Activated CD4-positive, alpha-beta memory T cell treated with anti-CD3 and anti-CD28 coated beads for 36 hours (primary cell): ENCODE measurements at regions of chr5 and their contacts with region 1.

Region 1: DNA sequence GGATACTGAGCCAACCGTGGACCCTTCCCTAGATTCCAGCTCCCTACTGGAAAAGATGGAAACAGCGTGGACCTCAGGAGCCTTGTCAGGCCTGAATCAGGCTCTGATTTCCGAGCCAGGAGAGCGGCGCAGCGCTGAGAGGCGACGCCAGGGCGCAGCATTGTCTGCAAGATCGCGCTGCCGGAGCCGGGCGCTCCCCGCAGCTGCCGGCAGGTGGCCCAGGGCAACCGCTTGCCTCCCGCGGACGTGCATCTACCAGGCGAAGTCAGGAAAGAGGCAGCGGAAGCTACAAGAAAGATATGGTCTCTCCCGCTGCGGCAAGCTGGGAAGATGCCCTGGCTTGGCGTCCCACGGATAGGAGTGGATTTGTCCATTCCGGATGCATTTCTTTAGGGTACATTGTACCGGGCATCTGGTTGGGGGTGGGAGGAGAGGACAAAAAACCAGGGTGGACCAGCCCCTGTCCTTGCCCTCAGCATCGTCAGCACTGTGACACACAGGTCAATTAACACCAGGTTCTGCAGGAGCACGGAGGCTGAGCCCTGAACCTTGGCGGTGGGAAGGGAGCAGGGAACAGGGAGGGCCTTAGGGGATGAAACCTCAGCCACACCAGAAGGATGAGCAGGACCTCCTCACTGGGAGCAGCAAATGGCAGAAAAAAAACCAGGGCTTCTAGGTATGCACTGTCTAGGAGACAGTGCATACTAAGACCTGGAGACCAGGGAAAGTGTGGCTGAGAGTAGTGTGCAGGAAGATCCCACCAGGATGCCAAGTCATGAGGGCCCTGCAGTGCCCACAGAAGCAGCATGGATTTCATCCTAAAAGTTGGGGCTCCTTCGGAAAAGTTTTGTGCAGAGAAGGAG is 55.9 kb downstream of the SFXN1 start:
- DNase-seq: peak; percentile 91
- H3K4me3 Mint-ChIP-seq: peak overlapping the region; percentile 52
- H3K27ac Mint-ChIP-seq: peak overlapping the region; percentile 56
- H3K4me1 Mint-ChIP-seq: peaks cover 44% of the 10 kb centered on the region
- H3K27me3 Mint-ChIP-seq: no peaks in the 10 kb centered on the region

Region 2: GRCh38 chr5:175363300-175363699 is 171.0 kb before region 1 on chr5:
- CTCF ChIA-PET with region 1: no interaction called
- POLR2A ChIA-PET with region 1: no interaction called
- intact Hi-C with region 1: no loop called
- DNase-seq: no peak
- H3K4me3 Mint-ChIP-seq: no peak overlapping the region
- H3K27ac Mint-ChIP-seq: no peak overlapping the region
- H3K4me1 Mint-ChIP-seq: no peaks in the 10 kb centered on the region
- H3K27me3 Mint-ChIP-seq: peaks cover 22% of the 10 kb centered on the region

Region 3: GRCh38 chr5:175517818-175518450 is 16.4 kb before region 1 on chr5:
- CTCF ChIA-PET with region 1: interaction called, 41 read pairs
- POLR2A ChIA-PET with region 1: interaction called, 3 read pairs
- intact Hi-C with region 1: no loop called
- DNase-seq: peak; percentile 95
- H3K4me3 Mint-ChIP-seq: peak overlapping the region; percentile 53
- H3K27ac Mint-ChIP-seq: peak overlapping the region; percentile 100
- H3K4me1 Mint-ChIP-seq: peaks cover 92% of the 10 kb centered on the region
- H3K27me3 Mint-ChIP-seq: no peaks in the 10 kb centered on the region

Region 4: DNA sequence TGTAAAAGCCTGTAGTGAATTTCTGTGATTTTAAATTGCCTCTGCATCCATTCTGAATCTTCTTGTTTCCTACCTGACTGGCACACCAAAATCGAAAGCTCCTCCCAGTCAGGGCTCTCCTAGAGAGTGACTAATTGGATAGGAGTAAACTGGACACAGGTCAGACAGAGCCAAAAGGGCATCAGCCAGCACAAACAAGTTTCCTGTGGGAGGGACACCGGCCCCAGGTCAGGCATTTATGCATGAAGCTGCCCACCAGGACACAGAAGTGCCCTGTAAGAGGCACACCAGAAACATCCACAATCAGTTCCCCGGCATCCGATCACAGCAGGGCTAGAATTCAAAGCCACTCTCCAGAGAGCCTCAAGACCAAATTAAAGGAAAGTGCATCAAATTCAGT is 22.5 kb after region 1 on chr5:
- CTCF ChIA-PET with region 1: interaction called, 10 read pairs
- POLR2A ChIA-PET with region 1: no interaction called
- intact Hi-C with region 1: no loop called
- DNase-seq: no peak
- H3K4me3 Mint-ChIP-seq: no peak overlapping the region
- H3K27ac Mint-ChIP-seq: no peak overlapping the region
- H3K4me1 Mint-ChIP-seq: peaks cover 3% of the 10 kb centered on the region
- H3K27me3 Mint-ChIP-seq: peaks cover 16% of the 10 kb centered on the region

Region 5: GRCh38 chr5:175663186-175664184 is 129.2 kb after region 1 on chr5:
- CTCF ChIA-PET with region 1: interaction called, 14 read pairs
- POLR2A ChIA-PET with region 1: interaction called, 3 read pairs
- intact Hi-C with region 1: no loop called
- DNase-seq: no peak
- H3K4me3 Mint-ChIP-seq: no peak overlapping the region
- H3K27ac Mint-ChIP-seq: no peak overlapping the region
- H3K4me1 Mint-ChIP-seq: peaks cover 46% of the 10 kb centered on the region
- H3K27me3 Mint-ChIP-seq: no peaks in the 10 kb centered on the region

Region 6: DNA sequence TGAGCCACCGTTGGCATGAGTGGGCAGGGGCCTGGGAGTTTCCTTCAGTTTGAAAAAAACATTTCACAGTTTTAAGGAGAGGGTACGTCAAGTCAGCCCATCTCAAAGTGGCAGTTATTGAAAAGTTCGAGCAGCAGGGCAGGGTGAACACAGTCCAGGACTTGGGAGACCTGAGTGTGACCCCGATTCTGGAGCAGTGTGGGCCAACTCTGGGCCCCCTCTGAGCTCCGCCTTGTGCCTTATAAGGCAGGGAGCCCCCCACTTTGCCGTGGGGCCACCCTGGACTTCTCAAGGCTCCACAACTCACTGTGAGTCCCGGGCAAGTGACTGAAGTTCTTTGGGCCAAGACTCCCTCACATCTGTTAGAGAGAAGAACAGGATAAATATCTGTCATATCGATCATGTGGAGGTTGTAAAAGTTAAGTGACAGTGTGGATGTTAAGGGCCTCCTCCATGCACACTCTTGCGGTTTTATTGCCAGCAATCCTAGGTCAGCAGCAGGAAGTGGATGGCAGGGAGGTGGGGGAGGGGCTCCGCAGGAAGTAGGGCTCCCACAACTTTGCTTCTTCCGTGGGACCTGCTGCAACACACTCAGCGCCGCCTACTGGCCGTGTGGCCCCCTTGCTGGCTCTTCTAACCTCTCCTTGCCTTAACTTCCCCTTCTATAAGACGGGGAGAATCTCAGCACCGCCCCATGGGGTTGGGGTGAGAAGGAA is 162.0 kb after region 1 on chr5:
- CTCF ChIA-PET with region 1: interaction called, 273 read pairs
- POLR2A ChIA-PET with region 1: interaction called, 4 read pairs
- intact Hi-C with region 1: loop called (anchors 1 kb)
- DNase-seq: peak; percentile 92
- H3K4me3 Mint-ChIP-seq: peak overlapping the region; percentile 60
- H3K27ac Mint-ChIP-seq: peak overlapping the region; percentile 90
- H3K4me1 Mint-ChIP-seq: peaks cover 16% of the 10 kb centered on the region
- H3K27me3 Mint-ChIP-seq: no peaks in the 10 kb centered on the region

Region 7: DNA sequence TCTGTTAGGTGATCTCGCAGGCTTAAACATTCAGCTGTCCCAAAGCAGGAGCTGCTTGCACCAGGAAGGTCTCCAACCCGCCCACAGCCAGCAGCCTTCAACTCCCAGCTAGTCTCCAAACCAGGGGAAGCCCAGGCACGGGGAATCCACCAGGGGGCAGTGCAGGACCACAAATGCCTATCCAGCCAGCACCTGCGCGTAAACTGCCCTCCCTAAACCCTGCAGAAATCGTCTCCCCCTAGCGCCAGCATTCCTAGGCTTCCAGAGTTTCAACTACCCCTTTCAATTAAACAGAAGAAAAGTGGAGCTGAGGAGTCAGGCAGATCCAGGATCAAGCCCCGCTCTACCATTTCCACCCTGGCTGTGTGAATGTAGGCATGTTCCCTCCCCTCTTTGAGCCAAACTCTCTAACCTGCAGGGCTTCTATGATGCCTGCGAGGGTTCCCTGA is 195.6 kb after region 1 on chr5:
- CTCF ChIA-PET with region 1: interaction called, 69 read pairs
- POLR2A ChIA-PET with region 1: no interaction called
- intact Hi-C with region 1: no loop called
- DNase-seq: peak; percentile 94
- H3K4me3 Mint-ChIP-seq: no peak overlapping the region
- H3K27ac Mint-ChIP-seq: no peak overlapping the region
- H3K4me1 Mint-ChIP-seq: peaks cover 7% of the 10 kb centered on the region
- H3K27me3 Mint-ChIP-seq: peaks cover 20% of the 10 kb centered on the region